PC-9 (cell line): ENCODE measurements at regions of chr17 and their contacts with region 1.

Region 1: DNA sequence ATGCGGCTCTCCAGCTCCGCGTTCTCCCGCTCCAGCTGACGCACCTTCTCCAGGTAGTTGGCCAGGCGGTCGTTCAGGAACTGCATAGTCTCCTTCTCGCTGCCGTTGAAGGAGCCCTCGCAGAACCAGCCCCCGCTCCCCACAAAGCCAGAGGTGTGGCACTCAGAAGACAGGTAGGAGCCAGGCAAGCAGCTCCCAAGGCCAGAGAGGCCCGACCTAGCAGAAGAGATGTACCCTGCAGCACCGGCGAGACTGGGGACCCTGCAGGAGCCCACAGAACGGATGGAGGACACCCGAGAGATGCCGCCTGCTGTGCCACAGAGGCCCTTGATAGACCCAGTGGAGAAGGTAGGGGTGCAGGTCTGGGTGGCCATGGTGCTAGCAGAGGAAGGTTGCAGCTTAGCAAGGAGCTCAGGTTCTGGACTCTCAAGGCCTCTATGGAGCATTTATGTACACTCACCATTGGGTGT is at the start of gene KRT36:
- DNase-seq: no peak
- H3K4me3 ChIP-seq: no peak within 1 kb of the TSS
- H3K27ac ChIP-seq: no peak within 1 kb of the TSS
- H3K4me1 ChIP-seq: peaks cover 15% of the 10 kb centered on the region
- H3K27me3 ChIP-seq: no peaks in the 10 kb centered on the region
- CTCF ChIP-seq: no peak
- total RNA-seq, gene KRT36: not detected in 2 replicates

Region 2: GRCh38 chr17:41131979-41132378 is 357.5 kb before region 1 on chr17:
- CTCF ChIA-PET with region 1: no interaction called
- POLR2A ChIA-PET with region 1: interaction called, 11 read pairs
- intact Hi-C with region 1: no loop called
- DNase-seq: peak; percentile 20 to 93
- H3K4me3 ChIP-seq: no peak overlapping the region
- H3K27ac ChIP-seq: peak overlapping the region; percentile 87
- H3K4me1 ChIP-seq: peaks cover 21% of the 10 kb centered on the region
- H3K27me3 ChIP-seq: no peaks in the 10 kb centered on the region
- CTCF ChIP-seq: no peak